ENCODE measurements at regions of chr19 and their contacts with region 1.

Region 1: DNA sequence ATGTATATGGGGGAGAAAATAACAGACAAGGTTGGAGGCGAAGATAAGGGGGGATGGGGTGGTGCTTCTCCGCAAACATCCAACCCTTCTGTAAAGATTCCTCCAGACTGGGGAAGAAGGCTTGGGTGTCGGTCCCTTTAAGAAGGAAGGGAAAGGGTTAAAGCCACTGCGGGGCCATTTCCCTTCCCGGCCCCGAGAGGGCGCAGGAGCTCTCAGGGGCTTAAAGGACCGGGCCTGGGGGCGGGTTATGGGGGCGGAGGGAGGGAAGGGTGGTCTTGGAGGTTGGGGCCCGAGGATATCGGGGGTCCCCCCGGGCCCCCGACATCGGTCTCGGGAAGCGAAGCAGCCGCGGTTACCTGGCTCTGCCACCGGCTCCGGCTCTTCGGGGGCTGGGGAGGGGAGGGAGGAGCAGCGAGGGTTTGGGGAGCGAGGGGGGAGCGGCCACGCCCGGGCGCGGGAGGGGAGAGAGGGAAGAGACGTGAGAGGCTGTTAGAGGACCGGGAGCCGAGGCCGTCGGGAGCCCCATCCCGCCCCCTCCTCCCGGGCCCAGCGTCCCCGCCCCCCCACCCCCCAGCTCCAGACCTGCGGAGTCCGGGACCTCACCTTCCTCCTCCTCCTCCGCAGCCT is 2.8 kb downstream of the TNNT1 start:
- DNase-seq: peak; percentile 29
- H3K4me3 ChIP-seq: peak overlapping the region; percentile 48 to 54 (median 51)
- H3K27ac ChIP-seq: no peak overlapping the region
- H3K4me1 ChIP-seq: peaks cover 5% of the 10 kb centered on the region
- H3K27me3 ChIP-seq: no peaks in the 10 kb centered on the region
- CTCF ChIP-seq: peak; percentile 54 to 84

Region 2: GRCh38 chr19:55206664-55207500 is 60.7 kb after region 1 on chr19:
- CTCF ChIA-PET with region 1: interaction called, 19 read pairs
- dilution Hi-C with region 1: no loop called
- in situ Hi-C with region 1: no loop called
- intact Hi-C with region 1: no loop called
- DNase-seq: peak; percentile 85
- H3K4me3 ChIP-seq: peak overlapping the region in 1 of 3 experiments; percentile 36
- H3K27ac ChIP-seq: peak overlapping the region; percentile 40
- H3K4me1 ChIP-seq: peaks cover 28% of the 10 kb centered on the region
- H3K27me3 ChIP-seq: no peaks in the 10 kb centered on the region
- CTCF ChIP-seq: no peak

Region 3: GRCh38 chr19:55385740-55386529 is 239.7 kb after region 1 on chr19 and contains the start of gene RPL28:
- CTCF ChIA-PET with region 1: interaction called, 3 read pairs
- dilution Hi-C with region 1: no loop called
- in situ Hi-C with region 1: no loop called
- intact Hi-C with region 1: loop called (anchors 1 kb)
- DNase-seq: peak; percentile 96
- H3K4me3 ChIP-seq: peak within 1 kb of the TSS; percentile 74 to 98 (median 81)
- H3K27ac ChIP-seq: peak within 1 kb of the TSS; percentile 89
- H3K4me1 ChIP-seq: peaks cover 32% of the 10 kb centered on the region
- H3K27me3 ChIP-seq: no peaks in the 10 kb centered on the region
- CTCF ChIP-seq: no peak
- total RNA-seq, gene RPL28: 279 to 1,713 TPM

Region 4: DNA sequence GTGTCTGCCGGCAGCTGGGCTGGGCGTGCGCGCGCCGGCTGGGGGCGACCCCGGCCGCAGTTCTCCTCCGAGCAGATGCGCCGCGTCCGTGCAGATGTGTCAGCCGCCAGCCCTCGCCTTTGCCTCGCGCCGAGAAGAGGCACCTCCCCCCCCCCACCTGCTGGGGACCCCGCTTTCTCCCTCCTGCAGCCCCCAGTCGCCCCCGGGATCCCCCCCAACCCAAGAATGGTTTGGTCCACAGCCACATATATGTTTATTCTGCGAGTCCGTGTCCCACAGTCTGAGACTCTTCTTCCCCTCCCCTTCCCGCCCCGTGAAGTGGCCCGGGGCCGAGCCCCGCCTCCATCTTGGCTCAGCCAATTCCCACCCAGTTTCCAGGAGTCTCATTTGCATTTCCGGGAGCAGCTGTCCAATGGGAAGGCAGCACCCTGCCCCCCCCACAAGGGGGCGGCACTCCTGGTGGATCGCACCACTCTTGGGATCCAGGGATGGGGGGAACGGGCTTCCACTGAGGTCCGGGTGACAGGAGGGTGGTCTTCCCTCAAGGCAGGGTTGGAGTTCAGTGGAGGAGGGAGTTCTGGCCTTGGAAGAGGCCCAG is 306.7 kb after region 1 on chr19:
- CTCF ChIA-PET with region 1: interaction called, 5 read pairs
- dilution Hi-C with region 1: no loop called
- in situ Hi-C with region 1: no loop called
- intact Hi-C with region 1: loop called (anchors 1 kb)
- DNase-seq: peak; percentile 40
- H3K4me3 ChIP-seq: no peak overlapping the region
- H3K27ac ChIP-seq: no peak overlapping the region
- H3K4me1 ChIP-seq: peaks cover 12% of the 10 kb centered on the region
- H3K27me3 ChIP-seq: peaks cover 12% of the 10 kb centered on the region
- CTCF ChIP-seq: no peak

Region 5: DNA sequence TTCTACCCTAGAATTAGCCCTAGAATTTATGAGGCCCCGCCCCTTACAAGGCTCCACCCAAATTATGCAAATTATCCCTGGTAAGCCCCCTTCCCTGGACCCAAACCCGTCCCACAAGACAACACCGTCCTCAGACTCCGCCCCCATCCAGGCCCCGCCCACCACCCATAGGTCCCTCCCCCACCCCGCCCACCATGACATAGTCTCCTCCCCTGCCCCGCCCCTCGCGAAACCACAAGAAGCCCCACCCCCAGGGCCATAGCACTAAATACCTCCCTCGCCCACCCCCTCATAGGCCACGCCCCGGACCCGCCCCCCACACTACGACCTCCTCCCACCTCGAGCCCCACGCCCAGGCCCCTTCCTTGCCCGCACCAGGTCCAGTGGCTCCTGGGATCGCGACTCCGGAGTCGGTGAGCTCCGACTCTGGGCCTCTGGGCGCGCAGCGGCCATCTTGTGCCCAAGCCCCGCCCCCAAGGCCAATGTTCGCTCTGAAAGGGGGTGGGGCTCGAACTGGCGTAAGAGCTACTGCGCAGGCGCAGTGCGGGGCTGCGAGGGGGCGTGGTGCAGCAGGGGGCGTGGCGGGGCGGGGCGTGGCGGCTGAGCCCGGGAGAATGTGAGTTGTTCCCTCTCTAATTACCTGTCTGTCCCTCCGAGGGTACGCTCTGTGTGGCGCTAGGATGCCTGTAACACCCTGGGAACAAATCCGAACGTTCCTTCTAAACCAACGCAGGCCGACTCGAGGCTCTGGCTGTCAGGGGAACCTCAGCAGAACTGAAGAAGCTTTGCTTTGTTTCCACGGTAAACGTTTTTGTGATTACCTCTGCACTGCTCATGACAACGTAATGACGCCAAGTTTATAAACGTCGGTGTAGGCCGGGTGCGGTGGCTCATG is 478.2 kb after region 1 on chr19 and contains the start of gene ZNF784:
- CTCF ChIA-PET with region 1: no interaction called
- dilution Hi-C with region 1: no loop called
- in situ Hi-C with region 1: loop called in 1 of 2 experiments (anchors 25 kb)
- intact Hi-C with region 1: no loop called
- DNase-seq: peak; percentile 85
- H3K4me3 ChIP-seq: peak within 1 kb of the TSS; percentile 43 to 76 (median 54)
- H3K27ac ChIP-seq: peak within 1 kb of the TSS; percentile 39
- H3K4me1 ChIP-seq: peaks cover 4% of the 10 kb centered on the region
- H3K27me3 ChIP-seq: no peaks in the 10 kb centered on the region
- CTCF ChIP-seq: no peak
- total RNA-seq, gene ZNF784: 4.2 to 6.1 TPM

Measured in mammary epithelial cell (primary cell).